HepG2 (cell line): ENCODE measurements at regions of chr20 and their contacts with region 1.

Region 1: GRCh38 chr20:49186535-49187329 is 1.4 kb downstream of the STAU1 start:
- DNase-seq: peak; percentile 62
- ATAC-seq: peak; percentile 2; the same call in 1 of the 3 replicates
- H3K4me3 ChIP-seq: peak overlapping the region; percentile 88 to 99 (median 97)
- H3K27ac ChIP-seq: peak overlapping the region; percentile 77
- H3K4me1 ChIP-seq: peaks cover 42% of the 10 kb centered on the region
- H3K27me3 ChIP-seq: peaks cover 0 to 5% of the 10 kb centered on the region in 2 experiments; a peak in 1 of 5 replicates
- CTCF ChIP-seq: peak; percentile 9; the same call in 1 of the 2 replicates
- EP300 ChIP-seq: peak in 1 of 2 experiments; percentile 18; a peak in 1 of 4 replicates
- POLR2A ChIP-seq: peak; percentile 51 to 60; a peak in 3 of 4 replicates
- RAD21 ChIP-seq: no peak

Region 2: GRCh38 chr20:49100972-49101371 is 85.8 kb before region 1 on chr20:
- CTCF ChIA-PET with region 1: no interaction called
- POLR2A ChIA-PET with region 1: no interaction called
- in situ Hi-C with region 1: no loop called
- intact Hi-C with region 1: no loop called
- DNase-seq: no peak
- ATAC-seq: no peak
- H3K4me3 ChIP-seq: no peak overlapping the region
- H3K27ac ChIP-seq: no peak overlapping the region
- H3K4me1 ChIP-seq: no peaks in the 10 kb centered on the region
- H3K27me3 ChIP-seq: no peaks in the 10 kb centered on the region
- CTCF ChIP-seq: no peak
- EP300 ChIP-seq: no peak
- POLR2A ChIP-seq: 0 out of 4 replicates have a peak, but pooled peaks of 1 of the 2 experiments have one; percentile 29
- RAD21 ChIP-seq: no peak

Region 3: GRCh38 chr20:49161428-49162152 is 25.1 kb before region 1 on chr20:
- CTCF ChIA-PET with region 1: no interaction called
- POLR2A ChIA-PET with region 1: interaction called, 12 read pairs
- in situ Hi-C with region 1: no loop called
- intact Hi-C with region 1: loop called (anchors 2 kb)
- DNase-seq: peak; percentile 86
- ATAC-seq: peak; percentile 84
- H3K4me3 ChIP-seq: peak overlapping the region in 1 of 3 experiments; percentile 8; a peak in 1 of 6 replicates
- H3K27ac ChIP-seq: peak overlapping the region; percentile 69
- H3K4me1 ChIP-seq: peaks cover 55% of the 10 kb centered on the region
- H3K27me3 ChIP-seq: no peaks in the 10 kb centered on the region
- CTCF ChIP-seq: no peak
- EP300 ChIP-seq: peak in 1 of 2 experiments; percentile 17; a peak in 1 of 4 replicates
- POLR2A ChIP-seq: no peak
- RAD21 ChIP-seq: no peak

Region 4: GRCh38 chr20:49166534-49167449 is 19.9 kb before region 1 on chr20:
- CTCF ChIA-PET with region 1: no interaction called
- POLR2A ChIA-PET with region 1: interaction called, 12 read pairs
- in situ Hi-C with region 1: no loop called
- intact Hi-C with region 1: loop called (anchors 2 kb)
- DNase-seq: no peak
- ATAC-seq: no peak
- H3K4me3 ChIP-seq: no peak overlapping the region
- H3K27ac ChIP-seq: no peak overlapping the region
- H3K4me1 ChIP-seq: peaks cover 59% of the 10 kb centered on the region
- H3K27me3 ChIP-seq: no peaks in the 10 kb centered on the region
- CTCF ChIP-seq: no peak
- EP300 ChIP-seq: no peak
- POLR2A ChIP-seq: no peak
- RAD21 ChIP-seq: no peak

Region 5: GRCh38 chr20:49228676-49229075 is 41.9 kb after region 1 on chr20:
- CTCF ChIA-PET with region 1: no interaction called
- POLR2A ChIA-PET with region 1: no interaction called
- in situ Hi-C with region 1: no loop called
- intact Hi-C with region 1: no loop called
- DNase-seq: no peak
- ATAC-seq: no peak
- H3K4me3 ChIP-seq: no peak overlapping the region
- H3K27ac ChIP-seq: no peak overlapping the region
- H3K4me1 ChIP-seq: no peaks in the 10 kb centered on the region
- H3K27me3 ChIP-seq: no peaks in the 10 kb centered on the region
- CTCF ChIP-seq: no peak
- EP300 ChIP-seq: no peak
- POLR2A ChIP-seq: no peak
- RAD21 ChIP-seq: no peak